Activated T-helper 1 cell treated with anti-CD3 and anti-CD28 coated beads, Interleukin-12 subunit alpha, Interleukin-12 subunit beta, Interleukin-2, Interleukin-4 antibody, amounts not matched to agents 30 ng/mL and 10 ng/mL and 1 ng/mL, durations not matched to agents 14 hours and 24 hours and 36 hours (primary cell): ENCODE measurements at regions of chr18 and their contacts with region 1.

Region 1: GRCh38 chr18:27599202-27599829 is 414.2 kb upstream of the CHST9 start:
- DNase-seq: no peak
- H3K4me3 Mint-ChIP-seq: no peak overlapping the region
- H3K27ac Mint-ChIP-seq: no peak overlapping the region
- H3K4me1 Mint-ChIP-seq: no peaks in the 10 kb centered on the region
- H3K27me3 Mint-ChIP-seq: no peaks in the 10 kb centered on the region

Region 2: DNA sequence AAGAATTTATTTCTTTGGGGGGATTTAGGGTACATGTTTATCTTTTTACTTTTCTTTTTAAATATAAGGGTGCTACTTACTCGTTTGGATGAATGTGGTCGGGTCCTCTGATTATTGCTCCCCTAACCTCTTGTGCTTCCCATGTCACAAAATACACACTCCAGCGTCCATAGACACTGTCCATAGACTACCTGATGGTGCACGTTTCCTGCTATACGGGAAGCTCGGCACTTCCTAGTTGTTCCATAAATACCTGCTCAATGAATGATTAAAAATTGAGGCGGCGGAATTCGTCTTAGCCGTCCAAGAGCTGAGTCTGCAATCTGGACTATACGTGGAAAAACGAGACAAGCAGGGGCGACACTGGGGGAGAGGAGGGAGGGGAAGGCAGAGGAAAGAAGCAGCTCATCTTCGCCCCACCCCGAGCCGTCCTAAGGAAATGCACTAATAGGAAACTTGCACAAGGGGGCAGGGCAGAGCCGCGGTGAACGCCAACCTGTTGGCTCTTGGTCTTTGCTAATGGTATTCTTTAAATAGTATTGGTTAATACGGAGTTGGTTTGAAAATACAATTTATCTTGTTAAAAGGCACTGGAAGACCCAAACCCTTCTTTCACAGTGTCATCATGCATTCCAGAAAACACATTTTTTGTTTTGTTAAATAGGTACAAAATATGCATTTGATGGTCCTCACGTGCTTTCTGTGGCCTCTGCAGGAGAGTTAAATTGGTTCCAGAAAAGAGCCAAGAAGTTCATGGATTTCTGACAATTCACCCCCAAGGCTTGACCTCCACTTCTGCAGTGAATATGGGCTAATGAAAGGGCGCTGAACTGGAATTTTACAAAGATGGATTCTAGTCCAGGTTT is 977.9 kb before region 1 on chr18:
- intact Hi-C with region 1: loop called (anchors 2 kb)
- DNase-seq: no peak
- H3K4me3 Mint-ChIP-seq: peak overlapping the region; percentile 24
- H3K27ac Mint-ChIP-seq: no peak overlapping the region
- H3K4me1 Mint-ChIP-seq: no peaks in the 10 kb centered on the region
- H3K27me3 Mint-ChIP-seq: no peaks in the 10 kb centered on the region

Region 3: GRCh38 chr18:27363872-27364271 is 235.4 kb before region 1 on chr18:
- intact Hi-C with region 1: loop called (anchors 1 kb)
- DNase-seq: no peak
- H3K4me3 Mint-ChIP-seq: no peak overlapping the region
- H3K27ac Mint-ChIP-seq: no peak overlapping the region
- H3K4me1 Mint-ChIP-seq: no peaks in the 10 kb centered on the region
- H3K27me3 Mint-ChIP-seq: no peaks in the 10 kb centered on the region

Region 4: DNA sequence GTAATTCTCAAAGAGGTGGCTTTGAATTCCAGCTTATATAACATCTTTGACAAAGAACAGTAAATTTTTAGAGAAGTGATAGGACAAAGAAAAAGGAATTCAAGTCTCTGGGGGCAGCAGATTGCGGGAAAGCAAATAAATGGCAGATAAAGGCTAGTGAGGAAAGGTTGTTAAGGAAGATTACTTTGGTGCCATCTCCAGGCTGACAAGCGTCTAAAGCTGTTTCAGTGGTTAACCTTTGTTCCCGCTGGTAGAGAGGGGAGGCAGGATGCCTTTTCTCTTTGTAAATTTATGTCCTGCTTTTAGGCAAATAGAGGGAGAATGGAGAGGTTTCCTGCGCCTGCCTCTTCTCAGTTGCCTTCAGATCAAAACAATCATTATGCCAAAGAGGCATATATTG is 17.0 kb after region 1 on chr18:
- intact Hi-C with region 1: no loop called
- DNase-seq: no peak
- H3K4me3 Mint-ChIP-seq: no peak overlapping the region
- H3K27ac Mint-ChIP-seq: no peak overlapping the region
- H3K4me1 Mint-ChIP-seq: no peaks in the 10 kb centered on the region
- H3K27me3 Mint-ChIP-seq: no peaks in the 10 kb centered on the region